Psoas muscle (tissue), 8 donors: ENCODE measurements at regions of chr16 and their contacts with region 1.

Region 1: DNA sequence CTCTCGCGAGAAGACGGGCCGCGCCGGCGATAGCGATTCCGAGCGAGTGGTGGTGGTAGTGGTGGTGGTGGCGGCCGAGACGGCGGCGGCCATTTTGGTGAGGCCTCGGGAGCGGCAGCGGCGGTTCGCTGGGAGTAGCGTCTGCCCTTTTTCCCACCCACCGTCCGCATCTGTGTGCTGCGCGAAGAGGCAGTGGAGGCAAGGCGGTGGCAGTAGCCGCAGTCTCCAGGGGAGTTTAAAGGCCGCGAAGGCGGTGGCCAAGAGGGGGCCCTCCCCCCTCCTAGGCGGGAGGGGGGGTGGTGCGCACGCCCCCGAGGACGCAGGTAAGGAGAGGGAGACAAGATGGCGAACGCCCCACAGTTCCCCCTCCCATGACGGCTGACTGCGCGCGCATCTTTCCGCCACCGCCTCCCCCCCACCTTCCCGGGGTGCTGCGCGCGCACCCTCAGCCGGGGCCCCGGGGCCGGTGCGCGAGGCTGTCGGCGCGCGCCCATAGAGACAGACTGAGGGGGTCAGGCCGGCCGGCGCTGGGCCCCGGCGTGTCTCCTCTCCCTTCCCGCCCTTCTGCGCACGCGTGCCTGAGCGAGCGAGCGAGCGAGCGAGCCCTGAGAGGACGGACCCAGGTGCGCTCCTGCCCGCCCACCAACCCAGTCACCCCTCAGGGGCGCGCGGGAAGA is 694 bp upstream of the SRCAP start:
- DNase-seq: peak; percentile 99 to 100
- ATAC-seq: peak; percentile 88 to 94 (median 91)
- H3K4me3 ChIP-seq: peak overlapping the region; percentile 98
- H3K27ac ChIP-seq: peak overlapping the region; percentile 95
- H3K4me1 ChIP-seq: peaks cover 17% of the 10 kb centered on the region
- H3K27me3 ChIP-seq: no peaks in the 10 kb centered on the region
- CTCF ChIP-seq: no peak

Region 2: GRCh38 chr16:30657866-30658730 is 40.2 kb before region 1 on chr16 and contains the start of gene FBRS:
- intact Hi-C with region 1: loop called (anchors 2 to 5 kb)
- DNase-seq: peak; percentile 100
- ATAC-seq: peak; percentile 86 to 88 (median 87)
- H3K4me3 ChIP-seq: peak within 1 kb of the TSS; percentile 93
- H3K27ac ChIP-seq: peak within 1 kb of the TSS; percentile 100
- H3K4me1 ChIP-seq: peaks cover 37% of the 10 kb centered on the region
- H3K27me3 ChIP-seq: no peaks in the 10 kb centered on the region
- CTCF ChIP-seq: peak; percentile 75
- total RNA-seq, gene FBRS: 31.2 to 58.5 (median 38.6) TPM